ENCODE measurements at regions of chr5 and their contacts with region 1.

Region 1: GRCh38 chr5:170312666-170313065 is 15.1 kb upstream of the LCP2 start:
- DNase-seq: no peak
- ATAC-seq: peak; percentile 69
- H3K4me3 Mint-ChIP-seq: peak overlapping the region; percentile 51
- H3K27ac Mint-ChIP-seq: peak overlapping the region; percentile 78
- H3K4me1 Mint-ChIP-seq: peaks cover 38% of the 10 kb centered on the region
- H3K27me3 Mint-ChIP-seq: no peaks in the 10 kb centered on the region

Region 2: GRCh38 chr5:170278611-170279452 is 33.8 kb before region 1 on chr5:
- POLR2A ChIA-PET with region 1: interaction called, 10 read pairs
- DNase-seq: peak; percentile 87
- ATAC-seq: peak; percentile 76
- H3K4me3 Mint-ChIP-seq: peak overlapping the region; percentile 69
- H3K27ac Mint-ChIP-seq: peak overlapping the region; percentile 88
- H3K4me1 Mint-ChIP-seq: peaks cover 86% of the 10 kb centered on the region
- H3K27me3 Mint-ChIP-seq: no peaks in the 10 kb centered on the region

Region 3: GRCh38 chr5:170293273-170293672 is 19.4 kb before region 1 on chr5:
- POLR2A ChIA-PET with region 1: interaction called, 21 read pairs
- DNase-seq: peak; percentile 88
- ATAC-seq: peak; percentile 68
- H3K4me3 Mint-ChIP-seq: peak overlapping the region; percentile 99
- H3K27ac Mint-ChIP-seq: peak overlapping the region; percentile 97
- H3K4me1 Mint-ChIP-seq: peaks cover 60% of the 10 kb centered on the region
- H3K27me3 Mint-ChIP-seq: no peaks in the 10 kb centered on the region

Region 4: DNA sequence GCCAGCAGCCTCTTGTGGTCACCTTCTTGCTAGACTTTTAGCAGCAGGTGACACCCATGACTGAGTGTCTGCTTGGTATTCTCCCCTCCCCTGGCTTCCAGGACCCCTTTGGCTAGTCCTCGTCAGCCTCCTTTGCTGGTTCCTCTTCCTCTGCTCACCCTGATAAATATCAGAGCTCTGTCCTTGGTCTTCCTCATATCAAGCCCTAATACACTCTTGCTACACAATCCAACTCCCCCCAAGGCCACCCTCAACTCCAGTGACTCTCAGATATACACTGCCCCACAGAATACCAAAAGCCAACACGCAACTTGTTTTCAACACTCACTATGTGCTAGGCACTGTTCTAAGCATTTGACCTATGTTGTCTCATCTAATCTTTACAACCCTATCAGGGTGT is 15.2 kb after region 1 on chr5:
- POLR2A ChIA-PET with region 1: interaction called, 21 read pairs
- DNase-seq: no peak
- ATAC-seq: no peak
- H3K4me3 Mint-ChIP-seq: no peak overlapping the region
- H3K27ac Mint-ChIP-seq: no peak overlapping the region
- H3K4me1 Mint-ChIP-seq: peaks cover 9% of the 10 kb centered on the region
- H3K27me3 Mint-ChIP-seq: no peaks in the 10 kb centered on the region